ENCODE measurements at regions of chr1 and their contacts with region 1.

Region 1: GRCh38 chr1:172398970-172399755 is 21.3 kb upstream of the C1orf105 start:
- DNase-seq: no peak
- ATAC-seq: peak; percentile 92

Region 2: DNA sequence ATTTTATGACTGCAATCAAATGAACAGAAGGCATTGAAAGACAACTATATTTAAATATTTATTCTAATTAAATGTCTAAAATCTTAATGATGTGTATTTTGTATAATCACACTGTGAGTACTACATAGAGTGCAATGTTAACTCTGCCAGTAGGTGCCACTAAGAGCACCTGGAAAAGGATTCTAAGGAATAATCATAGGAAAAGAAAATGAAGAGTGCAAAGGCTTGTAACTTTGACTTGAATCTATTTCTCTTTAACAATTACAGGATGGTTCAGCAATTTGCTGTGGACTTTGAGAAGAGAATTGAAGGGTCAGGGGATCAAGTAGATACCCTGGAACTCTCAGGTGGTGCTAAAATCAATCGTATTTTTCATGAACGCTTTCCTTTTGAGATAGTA is 357.4 kb before region 1 on chr1:
- intact Hi-C with region 1: loop called (anchors 5 kb)
- DNase-seq: no peak
- ATAC-seq: peak; percentile 63

Region 3: DNA sequence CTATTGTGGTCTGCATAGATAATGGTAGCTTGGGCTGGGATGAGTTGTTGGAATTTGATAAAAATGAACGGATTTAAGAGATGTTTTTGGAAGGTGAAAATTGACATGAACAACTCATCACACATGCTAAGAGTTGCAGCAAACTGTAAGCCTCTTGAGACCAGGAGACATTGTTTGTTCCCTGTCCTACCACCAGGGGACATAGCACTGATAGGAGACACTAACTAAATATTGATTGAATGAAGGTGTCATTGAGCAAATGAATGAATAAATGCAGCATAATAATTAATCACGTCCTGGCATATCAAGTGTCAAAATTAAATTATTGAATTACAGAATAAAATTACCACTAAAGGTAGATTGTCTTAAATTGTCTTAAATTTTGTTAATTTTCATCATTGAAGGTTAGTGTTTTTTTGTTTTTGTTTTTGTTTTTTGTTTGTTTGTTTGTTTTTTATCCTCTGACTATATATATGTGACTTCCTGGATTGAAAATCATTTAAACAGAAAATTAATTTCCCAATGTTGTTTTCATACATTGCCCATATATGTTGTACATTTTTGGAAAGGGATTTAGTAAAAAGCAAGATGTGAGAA is 264.0 kb before region 1 on chr1:
- intact Hi-C with region 1: loop called (anchors 2 kb)
- DNase-seq: no peak
- ATAC-seq: no peak

Region 4: GRCh38 chr1:172322219-172323061 is 76.7 kb before region 1 on chr1:
- intact Hi-C with region 1: loop called (anchors 10 kb)
- DNase-seq: peak; percentile 63
- ATAC-seq: peak; percentile 94

Region 5: DNA sequence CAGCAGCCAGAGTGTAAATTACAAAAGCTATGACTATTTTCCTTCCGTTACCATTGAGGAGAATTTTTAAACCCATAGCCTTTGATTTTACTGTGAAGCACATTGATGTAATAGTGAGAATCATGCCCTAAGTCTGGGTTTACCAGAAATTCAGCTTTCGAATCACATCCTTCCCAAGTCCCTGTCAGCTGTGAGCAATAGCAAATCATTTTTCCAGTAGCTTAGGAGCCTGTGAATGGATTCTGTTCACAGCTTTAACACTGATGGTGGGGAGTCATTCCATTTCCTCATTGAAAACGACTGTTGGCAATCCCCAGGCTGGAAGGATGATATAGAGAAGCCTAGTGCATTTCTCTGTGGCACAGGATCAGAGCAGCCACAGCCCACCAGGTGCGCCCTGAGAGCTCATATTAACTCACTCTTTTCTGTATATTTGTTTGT is 60.8 kb before region 1 on chr1:
- intact Hi-C with region 1: no loop called
- DNase-seq: no peak
- ATAC-seq: no peak

Measured in Right ventricle myocardium inferior (tissue), 1 donor.